ENCODE measurements at regions of chr22 and their contacts with region 1.

Region 1: GRCh38 chr22:29531419-29531818 is 22.1 kb downstream of the THOC5 start:
- DNase-seq: no peak
- H3K4me3 ChIP-seq: no peak overlapping the region
- H3K27ac ChIP-seq: no peak overlapping the region
- H3K4me1 ChIP-seq: no peaks in the 10 kb centered on the region
- H3K27me3 ChIP-seq: no peaks in the 10 kb centered on the region
- CTCF ChIP-seq: no peak
- POLR2A ChIP-seq: no peak

Region 2: DNA sequence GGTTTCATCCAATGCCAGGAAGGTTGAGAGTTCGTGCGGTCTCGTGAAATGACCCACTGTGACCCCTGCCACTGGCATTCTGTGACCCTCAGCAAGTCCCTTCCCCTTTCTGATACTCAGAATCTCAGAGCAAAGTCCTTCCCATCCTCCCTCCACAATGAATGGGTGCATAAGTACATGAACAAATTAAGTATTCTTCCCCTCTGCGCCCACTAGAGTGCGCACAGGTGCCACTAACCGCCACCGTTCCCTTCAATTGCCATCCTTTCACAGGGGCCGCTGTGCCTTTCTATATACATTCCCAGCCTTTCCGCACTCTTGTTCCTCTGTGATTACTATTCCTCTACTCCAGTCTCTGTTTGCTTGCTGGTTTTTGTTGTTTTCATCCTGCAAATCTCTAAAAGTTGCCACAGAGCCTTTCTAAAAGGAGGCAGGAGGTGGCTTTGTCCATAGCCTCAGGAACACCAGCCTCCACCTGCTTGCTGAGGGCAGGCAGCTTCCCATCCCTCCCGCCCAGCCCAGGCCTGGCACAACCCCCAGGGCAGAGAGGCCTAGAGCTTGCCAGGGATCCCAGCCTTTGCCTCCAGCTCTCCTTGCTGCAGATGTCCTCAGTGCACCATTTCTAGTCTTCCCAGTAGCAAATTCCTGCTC is 136.4 kb before region 1 on chr22:
- intact Hi-C with region 1: loop called (anchors 10 kb)
- DNase-seq: peak in 1 of 2 donors; percentile 65
- H3K4me3 ChIP-seq: no peak overlapping the region
- H3K27ac ChIP-seq: no peak overlapping the region
- H3K4me1 ChIP-seq: no peaks in the 10 kb centered on the region
- H3K27me3 ChIP-seq: no peaks in the 10 kb centered on the region
- CTCF ChIP-seq: peak; percentile 42 to 68 (median 51)
- POLR2A ChIP-seq: no peak

Region 3: DNA sequence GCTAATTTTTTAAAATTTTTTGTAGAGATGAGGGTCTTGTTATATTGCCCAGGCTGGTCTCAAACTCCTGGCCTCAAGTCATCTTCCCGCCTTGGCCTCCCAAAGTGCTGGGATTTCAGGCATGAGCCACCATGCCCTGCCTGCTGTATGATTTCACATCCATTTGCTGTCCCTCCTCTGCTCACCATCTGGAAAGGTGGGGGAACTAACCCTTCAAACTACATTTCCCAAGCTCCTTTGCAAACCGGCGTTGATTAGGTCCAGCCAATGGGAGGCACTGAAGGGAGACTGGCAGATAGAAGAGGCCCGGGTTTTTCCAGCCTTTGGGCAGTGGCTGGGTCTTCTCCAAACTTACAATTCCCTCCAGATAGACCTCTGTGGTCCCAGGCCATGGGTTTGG is 73.7 kb before region 1 on chr22:
- intact Hi-C with region 1: no loop called
- DNase-seq: no peak
- H3K4me3 ChIP-seq: no peak overlapping the region
- H3K27ac ChIP-seq: no peak overlapping the region
- H3K4me1 ChIP-seq: no peaks in the 10 kb centered on the region
- H3K27me3 ChIP-seq: no peaks in the 10 kb centered on the region
- CTCF ChIP-seq: no peak
- POLR2A ChIP-seq: no peak

Region 4: GRCh38 chr22:29641042-29641699 is 109.8 kb after region 1 on chr22:
- intact Hi-C with region 1: no loop called
- DNase-seq: no peak
- H3K4me3 ChIP-seq: no peak overlapping the region
- H3K27ac ChIP-seq: peak overlapping the region; percentile 39
- H3K4me1 ChIP-seq: no peaks in the 10 kb centered on the region
- H3K27me3 ChIP-seq: no peaks in the 10 kb centered on the region
- CTCF ChIP-seq: no peak
- POLR2A ChIP-seq: no peak

Region 5: GRCh38 chr22:30866811-30867271 is 1335.4 kb after region 1 on chr22:
- intact Hi-C with region 1: no loop called
- DNase-seq: no peak
- H3K4me3 ChIP-seq: no peak overlapping the region
- H3K27ac ChIP-seq: no peak overlapping the region
- H3K4me1 ChIP-seq: no peaks in the 10 kb centered on the region
- H3K27me3 ChIP-seq: no peaks in the 10 kb centered on the region
- CTCF ChIP-seq: no peak
- POLR2A ChIP-seq: no peak

Measured in vagina (tissue), 2 donors.